CD4-positive, alpha-beta memory T cell (primary cell): ENCODE measurements at regions of chr22 and their contacts with region 1.

Region 1: GRCh38 chr22:42090596-42091454 is at the start of gene NDUFA6:
- DNase-seq: peak; percentile 97 to 99 (median 99)
- H3K4me3 ChIP-seq: peak within 1 kb of the TSS; percentile 79 to 93
- H3K4me3 Mint-ChIP-seq: peak within 1 kb of the TSS; percentile 97 to 100 (median 99)
- H3K27ac ChIP-seq: peak within 1 kb of the TSS; percentile 98
- H3K27ac Mint-ChIP-seq: peak within 1 kb of the TSS; percentile 99 to 100 (median 99)
- H3K4me1 ChIP-seq: peaks cover 27% of the 10 kb centered on the region
- H3K4me1 Mint-ChIP-seq: peaks cover 23 to 48% (median 35%) of the 10 kb centered on the region in 4 donors
- H3K27me3 ChIP-seq: no peaks in the 10 kb centered on the region
- H3K27me3 Mint-ChIP-seq: no peaks in the 10 kb centered on the region
- total RNA-seq, gene NDUFA6: 42.1 to 44.4 TPM

Region 2: DNA sequence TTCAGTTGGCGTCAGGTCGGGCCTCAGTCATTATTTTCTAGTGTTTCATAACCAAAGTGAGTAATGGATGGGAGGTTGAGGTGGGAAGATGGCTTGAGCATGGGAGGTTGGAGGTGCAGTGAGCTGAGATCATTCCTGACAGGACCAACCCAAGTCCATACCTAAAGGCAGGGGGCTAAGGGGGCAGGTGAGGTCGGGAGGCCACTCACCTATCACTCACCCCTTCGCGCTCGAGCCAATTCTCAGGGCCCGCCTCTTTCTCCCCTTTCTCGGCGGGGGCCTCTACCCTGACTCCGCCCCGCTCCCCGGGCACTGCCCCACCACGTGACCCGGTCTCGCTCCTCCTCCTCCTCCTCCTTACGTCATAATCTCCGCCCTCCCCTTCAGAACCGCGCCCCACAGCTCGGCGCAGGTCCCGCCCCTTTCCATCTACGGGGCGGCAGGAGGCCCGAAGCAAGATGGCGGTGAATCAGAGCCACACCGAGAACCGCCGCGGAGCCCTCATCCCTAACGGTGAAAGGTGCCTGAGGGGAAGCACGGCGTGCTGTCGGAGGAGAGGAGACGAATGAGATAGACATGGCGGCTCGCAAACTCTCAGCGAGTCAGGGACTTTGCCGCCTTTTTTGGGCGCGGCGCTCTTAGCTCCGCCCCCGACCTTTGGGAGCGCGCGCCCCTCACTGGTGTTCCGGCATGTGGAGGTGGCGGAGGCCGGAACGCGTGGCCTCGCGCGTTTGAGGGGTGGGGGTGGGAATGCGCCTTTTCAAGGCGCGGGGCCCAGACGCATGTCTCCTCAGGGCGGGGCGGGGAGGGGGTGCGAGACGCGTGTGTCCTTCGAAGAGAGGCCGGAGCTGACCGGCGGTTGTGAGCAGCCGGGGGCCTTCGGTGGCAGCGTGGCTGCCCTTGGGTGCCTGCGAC is 92.2 kb before region 1 on chr22 and contains the start of gene WBP2NL:
- CTCF ChIA-PET with region 1: interaction called, 3 read pairs
- POLR2A ChIA-PET with region 1: interaction called, 16 read pairs
- intact Hi-C with region 1: no loop called
- DNase-seq: peak; percentile 90 to 92 (median 92)
- H3K4me3 ChIP-seq: peak within 1 kb of the TSS; percentile 6 to 74
- H3K4me3 Mint-ChIP-seq: peak within 1 kb of the TSS; percentile 93 to 99 (median 98)
- H3K27ac ChIP-seq: peak within 1 kb of the TSS; percentile 61
- H3K27ac Mint-ChIP-seq: peak within 1 kb of the TSS; percentile 67 to 100 (median 98)
- H3K4me1 ChIP-seq: peaks cover 21% of the 10 kb centered on the region
- H3K4me1 Mint-ChIP-seq: peaks cover 13 to 35% (median 19%) of the 10 kb centered on the region in 4 donors
- H3K27me3 ChIP-seq: no peaks in the 10 kb centered on the region
- H3K27me3 Mint-ChIP-seq: no peaks in the 10 kb centered on the region
- total RNA-seq, gene WBP2NL: 3.5 to 5.4 TPM

Region 3: GRCh38 chr22:42101199-42101598 is 10.4 kb after region 1 on chr22:
- CTCF ChIA-PET with region 1: interaction called, 12 read pairs
- POLR2A ChIA-PET with region 1: interaction called, 5 read pairs
- intact Hi-C with region 1: no loop called
- DNase-seq: no peak
- H3K4me3 ChIP-seq: no peak overlapping the region
- H3K4me3 Mint-ChIP-seq: no peak overlapping the region
- H3K27ac ChIP-seq: no peak overlapping the region
- H3K27ac Mint-ChIP-seq: no peak overlapping the region
- H3K4me1 ChIP-seq: no peaks in the 10 kb centered on the region
- H3K4me1 Mint-ChIP-seq: no peaks in the 10 kb centered on the region
- H3K27me3 ChIP-seq: no peaks in the 10 kb centered on the region
- H3K27me3 Mint-ChIP-seq: no peaks in the 10 kb centered on the region

Region 4: GRCh38 chr22:42202669-42203068 is 111.8 kb after region 1 on chr22:
- CTCF ChIA-PET with region 1: interaction called, 3 read pairs
- POLR2A ChIA-PET with region 1: interaction called, 14 read pairs
- intact Hi-C with region 1: no loop called
- DNase-seq: peak; percentile 31 to 83 (median 45)
- H3K4me3 ChIP-seq: peak overlapping the region in 1 of 2 donors; percentile 25
- H3K4me3 Mint-ChIP-seq: peak overlapping the region; percentile 63 to 88 (median 79)
- H3K27ac ChIP-seq: peak overlapping the region; percentile 42
- H3K27ac Mint-ChIP-seq: peak overlapping the region; percentile 79 to 94 (median 89)
- H3K4me1 ChIP-seq: peaks cover 60% of the 10 kb centered on the region
- H3K4me1 Mint-ChIP-seq: peaks cover 47 to 79% (median 61%) of the 10 kb centered on the region in 4 donors
- H3K27me3 ChIP-seq: no peaks in the 10 kb centered on the region
- H3K27me3 Mint-ChIP-seq: no peaks in the 10 kb centered on the region

Region 5: DNA sequence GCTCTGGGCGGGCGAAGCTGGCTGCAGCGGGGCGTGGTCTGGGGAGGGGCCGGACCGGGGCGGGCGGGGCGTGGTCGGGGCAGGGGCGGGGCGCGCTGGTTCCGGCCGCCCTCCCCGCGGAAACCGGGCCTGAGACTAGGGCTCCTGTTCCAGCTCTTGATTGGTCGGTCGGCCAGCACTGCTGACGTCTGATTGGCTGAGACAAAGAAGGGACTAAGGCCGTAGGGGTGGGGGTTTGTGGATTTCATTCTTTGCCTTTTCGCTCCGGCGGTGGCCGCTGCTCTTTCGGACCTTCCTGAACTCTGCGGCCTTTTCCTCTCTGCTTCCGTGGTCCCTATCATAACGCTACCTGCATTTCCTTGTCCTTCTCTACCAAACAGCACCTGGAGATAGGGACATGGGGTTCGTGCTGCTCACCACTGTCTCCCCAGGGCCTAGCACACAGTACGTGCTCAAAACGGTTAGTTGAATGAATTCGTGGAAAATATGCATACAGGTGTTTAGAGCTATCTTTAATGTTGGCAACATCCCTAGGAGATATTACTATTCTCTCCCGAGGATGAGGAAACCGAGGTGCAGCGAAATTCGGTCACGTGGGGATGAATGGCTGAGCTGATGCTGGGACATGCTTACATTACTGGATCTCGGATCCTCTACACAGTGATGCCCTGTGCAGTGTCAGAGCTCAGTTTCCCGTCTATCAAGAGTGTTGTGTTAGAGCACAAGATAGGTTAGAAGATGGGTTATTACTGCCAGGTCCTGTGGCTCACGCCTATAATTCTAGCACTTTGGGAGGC is 278.6 kb after region 1 on chr22:
- CTCF ChIA-PET with region 1: interaction called, 3 read pairs
- POLR2A ChIA-PET with region 1: interaction called, 9 read pairs
- intact Hi-C with region 1: loop called (anchors 1 kb)
- DNase-seq: peak; percentile 76 to 84 (median 78)
- H3K4me3 ChIP-seq: peak overlapping the region; percentile 25 to 53
- H3K4me3 Mint-ChIP-seq: peak overlapping the region; percentile 85 to 95 (median 89)
- H3K27ac ChIP-seq: peak overlapping the region; percentile 4
- H3K27ac Mint-ChIP-seq: peak overlapping the region; percentile 71 to 90 (median 84)
- H3K4me1 ChIP-seq: peaks cover 18% of the 10 kb centered on the region
- H3K4me1 Mint-ChIP-seq: peaks cover 9 to 25% (median 12%) of the 10 kb centered on the region in 4 donors
- H3K27me3 ChIP-seq: peaks cover 11% of the 10 kb centered on the region
- H3K27me3 Mint-ChIP-seq: peaks cover 7 to 18% of the 10 kb centered on the region in 2 donors

Region 6: GRCh38 chr22:42473484-42474193 is 382.8 kb after region 1 on chr22:
- CTCF ChIA-PET with region 1: interaction called, 6 read pairs
- POLR2A ChIA-PET with region 1: no interaction called
- intact Hi-C with region 1: loop called (anchors 1 kb)
- DNase-seq: peak in 4 of 5 donors; percentile 20 to 40 (median 27)
- H3K4me3 ChIP-seq: no peak overlapping the region
- H3K4me3 Mint-ChIP-seq: no peak overlapping the region
- H3K27ac ChIP-seq: no peak overlapping the region
- H3K27ac Mint-ChIP-seq: no peak overlapping the region
- H3K4me1 ChIP-seq: peaks cover 9% of the 10 kb centered on the region
- H3K4me1 Mint-ChIP-seq: peaks cover 5 to 7% (median 6%) of the 10 kb centered on the region in 4 donors
- H3K27me3 ChIP-seq: no peaks in the 10 kb centered on the region
- H3K27me3 Mint-ChIP-seq: peaks cover 0 to 4% of the 10 kb centered on the region in 2 donors